ENCODE measurements at regions of chr13 and their contacts with region 1.

Region 1: GRCh38 chr13:94620286-94620896 is 18.7 kb downstream of the GPR180 start:
- DNase-seq: no peak
- H3K4me3 ChIP-seq: no peak overlapping the region
- H3K27ac ChIP-seq: no peak overlapping the region
- H3K4me1 ChIP-seq: no peaks in the 10 kb centered on the region
- H3K27me3 ChIP-seq: no peaks in the 10 kb centered on the region
- CTCF ChIP-seq: peak; percentile 38 to 80 (median 64)
- EP300 ChIP-seq: no peak
- POLR2A ChIP-seq: no peak
- RAD21 ChIP-seq: peak; percentile 85 to 86

Region 2: GRCh38 chr13:94435604-94436226 is 184.7 kb before region 1 on chr13:
- CTCF ChIA-PET with region 1: interaction called, 121 read pairs
- POLR2A ChIA-PET with region 1: interaction called, 4 read pairs
- DNase-seq: no peak
- H3K4me3 ChIP-seq: no peak overlapping the region
- H3K27ac ChIP-seq: no peak overlapping the region
- H3K4me1 ChIP-seq: peaks cover 0 to 3% (median under 1%) of the 10 kb centered on the region in 4 experiments; a peak in 2 of 7 replicates
- H3K27me3 ChIP-seq: no peaks in the 10 kb centered on the region; a peak in 1 of 7 replicates
- CTCF ChIP-seq: peak in 2 of 3 experiments; percentile 39 to 43; a peak in 2 of 4 replicates
- EP300 ChIP-seq: no peak
- POLR2A ChIP-seq: no peak
- RAD21 ChIP-seq: peak; percentile 78 to 82

Region 3: DNA sequence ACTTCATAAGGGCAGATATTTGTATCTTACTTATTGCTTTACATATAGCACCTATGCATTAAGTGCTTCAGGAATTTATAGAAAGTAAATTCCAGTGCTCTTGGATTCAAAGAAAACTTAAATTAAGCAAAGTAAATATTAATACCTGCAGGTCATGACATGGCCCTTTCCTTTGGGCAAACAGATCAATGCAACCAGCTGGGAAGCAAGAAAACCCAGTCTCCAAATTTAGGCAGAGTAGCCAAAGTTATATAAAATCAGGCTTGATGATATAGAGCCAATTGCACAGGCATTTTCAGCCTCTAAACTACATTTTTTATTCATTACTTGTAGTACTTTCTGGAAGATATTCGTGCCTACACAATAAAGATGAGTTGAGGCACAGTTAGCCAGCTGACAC is 41.3 kb before region 1 on chr13:
- CTCF ChIA-PET with region 1: interaction called, 12 read pairs
- POLR2A ChIA-PET with region 1: no interaction called
- DNase-seq: no peak
- H3K4me3 ChIP-seq: no peak overlapping the region
- H3K27ac ChIP-seq: no peak overlapping the region
- H3K4me1 ChIP-seq: no peaks in the 10 kb centered on the region
- H3K27me3 ChIP-seq: no peaks in the 10 kb centered on the region
- CTCF ChIP-seq: no peak
- EP300 ChIP-seq: no peak
- POLR2A ChIP-seq: no peak
- RAD21 ChIP-seq: no peak

Region 4: DNA sequence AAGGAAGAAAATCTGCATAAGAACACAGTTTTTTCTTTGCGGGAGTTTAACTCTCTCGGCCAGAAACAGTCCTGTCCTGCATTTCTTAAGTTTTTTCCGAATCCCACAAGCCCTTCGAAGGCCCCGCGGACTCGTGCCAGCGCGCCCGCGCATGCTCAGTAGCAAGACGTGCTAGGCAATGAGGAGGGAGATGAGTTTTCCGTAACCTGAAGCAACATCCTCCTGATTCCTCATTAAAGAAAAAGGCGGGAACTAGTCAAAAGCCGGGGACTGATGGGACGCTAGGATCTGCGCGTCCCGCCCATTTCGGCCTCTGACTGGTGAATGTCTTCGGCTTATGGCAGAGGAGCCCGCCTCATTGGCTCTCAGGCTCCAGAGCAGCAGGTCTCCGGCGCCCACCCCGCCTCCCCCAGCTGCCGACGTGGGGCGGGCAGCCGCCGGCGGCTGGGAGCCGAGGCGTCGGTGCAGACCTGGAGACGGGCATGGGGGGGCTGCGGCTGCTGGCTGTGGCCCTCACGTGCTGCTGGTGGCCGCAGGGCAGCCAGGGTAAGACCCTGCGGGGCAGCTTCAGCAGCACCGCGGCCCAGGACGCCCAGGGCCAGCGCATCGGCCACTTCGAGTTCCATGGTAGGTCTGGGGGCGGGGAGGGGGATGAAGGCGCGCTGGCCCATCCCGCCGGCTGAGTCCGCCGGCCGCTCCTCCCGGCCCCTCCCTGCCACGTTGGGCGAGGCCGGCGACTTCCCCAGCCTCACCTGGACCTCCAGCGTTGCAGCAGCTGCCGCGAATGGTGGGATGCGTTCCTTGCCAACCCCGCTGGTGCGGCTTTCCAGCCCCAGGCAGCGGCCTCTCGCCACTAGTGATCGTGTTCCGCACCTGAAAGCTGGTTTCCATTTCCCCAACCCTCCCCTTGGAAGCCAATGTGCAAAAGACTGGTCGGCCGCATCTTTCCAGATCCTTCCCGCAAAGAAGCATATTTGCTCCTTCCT is 18.7 kb before region 1 on chr13 and contains the start of gene GPR180:
- CTCF ChIA-PET with region 1: interaction called, 30 read pairs
- POLR2A ChIA-PET with region 1: interaction called, 9 read pairs
- DNase-seq: peak; percentile 87 to 99
- H3K4me3 ChIP-seq: peak within 1 kb of the TSS; percentile 81 to 87 (median 84)
- H3K27ac ChIP-seq: peak within 1 kb of the TSS; percentile 68
- H3K4me1 ChIP-seq: peaks cover 0 to 1% (median 0%) of the 10 kb centered on the region in 4 experiments; a peak in 2 of 7 replicates
- H3K27me3 ChIP-seq: peaks cover 5 to 11% (median 8%) of the 10 kb centered on the region in 4 experiments
- CTCF ChIP-seq: no peak
- EP300 ChIP-seq: no peak
- POLR2A ChIP-seq: peak; percentile 92 to 93
- RAD21 ChIP-seq: no peak
- total RNA-seq, gene GPR180: 4.7 and 4.8 TPM in 2 replicates

Region 5: GRCh38 chr13:94630858-94631257 is 10.5 kb after region 1 on chr13:
- CTCF ChIA-PET with region 1: interaction called, 22 read pairs
- POLR2A ChIA-PET with region 1: interaction called, 4 read pairs
- DNase-seq: no peak
- H3K4me3 ChIP-seq: no peak overlapping the region
- H3K27ac ChIP-seq: no peak overlapping the region
- H3K4me1 ChIP-seq: no peaks in the 10 kb centered on the region; a peak in 1 of 7 replicates
- H3K27me3 ChIP-seq: no peaks in the 10 kb centered on the region
- CTCF ChIP-seq: no peak
- EP300 ChIP-seq: no peak
- POLR2A ChIP-seq: no peak
- RAD21 ChIP-seq: no peak

Measured in H1 (cell line).